CD4-positive, alpha-beta T cell (primary cell): ENCODE measurements at regions of chr15 and their contacts with region 1.

Region 1: DNA sequence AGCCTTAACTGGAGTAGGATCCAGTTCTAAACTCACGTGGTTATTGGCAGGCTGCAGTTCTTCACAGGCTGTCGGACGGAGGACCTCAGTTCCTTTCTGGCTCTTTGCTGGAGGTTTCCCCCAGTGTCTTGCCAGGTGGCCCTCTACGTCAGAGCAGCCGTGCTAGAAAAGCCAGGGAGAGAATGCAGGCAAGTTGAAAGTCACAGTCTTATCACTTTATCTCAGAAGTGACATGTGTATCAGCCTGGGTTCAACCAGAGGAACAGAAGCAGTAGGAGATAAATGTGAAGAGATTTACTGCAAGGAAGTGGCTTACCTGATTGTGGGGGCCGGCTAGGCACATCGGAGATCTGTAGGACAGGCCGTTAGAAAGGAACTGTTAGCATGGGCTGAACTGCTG is 125.3 kb upstream of the BNIP2 start:
- DNase-seq: peak in 12 of 14 experiments; percentile 18 to 78 (median 48)
- ATAC-seq: peak; percentile 93
- H3K4me3 ChIP-seq: no peak overlapping the region
- H3K4me3 Mint-ChIP-seq: peak overlapping the region; percentile 35
- H3K27ac ChIP-seq: peak overlapping the region in 1 of 2 donors; percentile 45
- H3K27ac Mint-ChIP-seq: peak overlapping the region; percentile 87
- H3K4me1 ChIP-seq: peaks cover 15% of the 10 kb centered on the region
- H3K4me1 Mint-ChIP-seq: peaks cover 36% of the 10 kb centered on the region
- H3K27me3 ChIP-seq: peaks cover 0 to 3% of the 10 kb centered on the region in 2 experiments
- H3K27me3 Mint-ChIP-seq: peaks cover 21% of the 10 kb centered on the region
- CTCF ChIP-seq: no peak

Region 2: DNA sequence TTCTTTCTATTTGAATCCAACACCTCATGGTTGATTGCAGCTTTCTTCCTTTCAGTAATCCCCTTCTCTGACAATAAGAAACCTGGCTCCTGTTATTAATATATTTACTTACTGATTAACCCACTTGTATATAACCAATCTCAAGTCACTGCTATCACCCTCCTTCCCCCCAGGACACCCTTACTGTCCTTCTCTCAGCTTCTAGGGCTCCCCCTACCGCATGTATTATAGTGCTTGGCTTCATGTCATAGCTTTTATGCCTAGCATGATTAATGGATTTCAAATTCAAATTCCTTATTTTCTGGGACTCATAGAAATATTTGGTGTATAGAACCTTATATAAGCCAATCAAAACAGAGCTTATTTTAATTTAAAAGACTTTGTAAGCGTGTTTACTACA is 49.6 kb before region 1 on chr15:
- CTCF ChIA-PET with region 1: no interaction called
- POLR2A ChIA-PET with region 1: no interaction called
- intact Hi-C with region 1: no loop called
- DNase-seq: no peak
- ATAC-seq: no peak
- H3K4me3 ChIP-seq: no peak overlapping the region
- H3K4me3 Mint-ChIP-seq: no peak overlapping the region
- H3K27ac ChIP-seq: no peak overlapping the region
- H3K27ac Mint-ChIP-seq: no peak overlapping the region
- H3K4me1 ChIP-seq: no peaks in the 10 kb centered on the region
- H3K4me1 Mint-ChIP-seq: peaks cover 8% of the 10 kb centered on the region
- H3K27me3 ChIP-seq: no peaks in the 10 kb centered on the region
- H3K27me3 Mint-ChIP-seq: no peaks in the 10 kb centered on the region
- CTCF ChIP-seq: no peak

Region 3: GRCh38 chr15:59779110-59779509 is 35.3 kb before region 1 on chr15:
- CTCF ChIA-PET with region 1: no interaction called
- POLR2A ChIA-PET with region 1: no interaction called
- intact Hi-C with region 1: loop called in 1 of 2 experiments (anchors 5 kb)
- DNase-seq: no peak
- ATAC-seq: no peak
- H3K4me3 ChIP-seq: no peak overlapping the region
- H3K4me3 Mint-ChIP-seq: no peak overlapping the region
- H3K27ac ChIP-seq: no peak overlapping the region
- H3K27ac Mint-ChIP-seq: no peak overlapping the region
- H3K4me1 ChIP-seq: peaks cover 5% of the 10 kb centered on the region
- H3K4me1 Mint-ChIP-seq: peaks cover 7% of the 10 kb centered on the region
- H3K27me3 ChIP-seq: no peaks in the 10 kb centered on the region
- H3K27me3 Mint-ChIP-seq: no peaks in the 10 kb centered on the region
- CTCF ChIP-seq: no peak

Region 4: GRCh38 chr15:60195611-60196010 is 381.2 kb after region 1 on chr15:
- CTCF ChIA-PET with region 1: no interaction called
- POLR2A ChIA-PET with region 1: no interaction called
- intact Hi-C with region 1: no loop called
- DNase-seq: no peak
- ATAC-seq: no peak
- H3K4me3 ChIP-seq: no peak overlapping the region
- H3K4me3 Mint-ChIP-seq: no peak overlapping the region
- H3K27ac ChIP-seq: no peak overlapping the region
- H3K27ac Mint-ChIP-seq: no peak overlapping the region
- H3K4me1 ChIP-seq: no peaks in the 10 kb centered on the region
- H3K4me1 Mint-ChIP-seq: no peaks in the 10 kb centered on the region
- H3K27me3 ChIP-seq: peaks cover 3 to 23% of the 10 kb centered on the region in 2 experiments
- H3K27me3 Mint-ChIP-seq: peaks cover 63% of the 10 kb centered on the region
- CTCF ChIP-seq: no peak